ENCODE measurements at regions of chr10 and their contacts with region 1.

Region 1: DNA sequence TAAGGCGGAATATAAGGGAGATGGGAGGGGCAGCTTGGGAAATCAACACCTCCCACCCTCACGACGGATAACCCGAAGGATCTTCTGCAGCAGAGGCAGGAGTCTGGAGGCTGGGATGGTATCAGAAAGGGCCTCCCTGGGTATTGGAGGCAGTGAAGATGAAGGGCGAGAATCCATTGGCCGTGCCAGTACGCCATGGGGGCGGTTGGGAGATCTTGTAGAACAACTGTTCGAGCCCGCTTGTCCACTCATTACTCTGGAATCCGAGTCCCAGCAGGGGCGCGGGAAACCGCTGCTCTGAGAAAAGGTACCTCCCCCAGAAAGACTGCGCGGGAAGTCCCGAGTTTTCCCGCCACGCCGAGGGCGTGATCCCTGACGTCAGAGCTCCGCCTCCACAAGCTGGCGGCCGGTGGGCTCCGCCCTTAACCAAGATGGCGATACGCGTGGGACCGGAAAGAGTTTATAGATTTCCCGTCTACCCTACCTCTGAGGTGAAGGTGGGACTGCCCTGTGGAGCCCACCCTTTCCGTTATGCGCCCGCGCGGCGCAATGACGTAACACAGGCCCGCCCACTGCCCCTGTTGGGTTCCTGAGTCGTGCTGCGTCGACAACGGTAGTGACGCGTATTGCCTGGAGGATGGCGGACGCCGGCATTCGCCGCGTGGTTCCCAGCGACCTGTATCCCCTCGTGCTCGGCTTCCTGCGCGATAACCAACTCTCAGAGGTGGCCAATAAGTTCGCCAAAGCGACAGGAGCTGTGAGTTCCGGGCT is at the start of gene NOLC1:
- DNase-seq: peak; percentile 95 to 100 (median 100)
- ATAC-seq: peak; percentile 97
- H3K4me3 ChIP-seq: peak within 1 kb of the TSS; percentile 87
- H3K4me3 Mint-ChIP-seq: peak within 1 kb of the TSS; percentile 91 to 98 (median 96)
- H3K27ac ChIP-seq: peak within 1 kb of the TSS; percentile 94
- H3K27ac Mint-ChIP-seq: peak within 1 kb of the TSS; percentile 91 to 98 (median 96)
- H3K4me1 ChIP-seq: peaks cover 11 to 16% of the 10 kb centered on the region in 2 donors
- H3K4me1 Mint-ChIP-seq: peaks cover 28 to 58% (median 43%) of the 10 kb centered on the region in 7 donors
- H3K27me3 ChIP-seq: no peaks in the 10 kb centered on the region
- H3K27me3 Mint-ChIP-seq: peaks cover 0 to 4% (median 0%) of the 10 kb centered on the region in 5 donors
- total RNA-seq, gene NOLC1: 45.1 to 98.5 (median 58.8) TPM

Region 2: DNA sequence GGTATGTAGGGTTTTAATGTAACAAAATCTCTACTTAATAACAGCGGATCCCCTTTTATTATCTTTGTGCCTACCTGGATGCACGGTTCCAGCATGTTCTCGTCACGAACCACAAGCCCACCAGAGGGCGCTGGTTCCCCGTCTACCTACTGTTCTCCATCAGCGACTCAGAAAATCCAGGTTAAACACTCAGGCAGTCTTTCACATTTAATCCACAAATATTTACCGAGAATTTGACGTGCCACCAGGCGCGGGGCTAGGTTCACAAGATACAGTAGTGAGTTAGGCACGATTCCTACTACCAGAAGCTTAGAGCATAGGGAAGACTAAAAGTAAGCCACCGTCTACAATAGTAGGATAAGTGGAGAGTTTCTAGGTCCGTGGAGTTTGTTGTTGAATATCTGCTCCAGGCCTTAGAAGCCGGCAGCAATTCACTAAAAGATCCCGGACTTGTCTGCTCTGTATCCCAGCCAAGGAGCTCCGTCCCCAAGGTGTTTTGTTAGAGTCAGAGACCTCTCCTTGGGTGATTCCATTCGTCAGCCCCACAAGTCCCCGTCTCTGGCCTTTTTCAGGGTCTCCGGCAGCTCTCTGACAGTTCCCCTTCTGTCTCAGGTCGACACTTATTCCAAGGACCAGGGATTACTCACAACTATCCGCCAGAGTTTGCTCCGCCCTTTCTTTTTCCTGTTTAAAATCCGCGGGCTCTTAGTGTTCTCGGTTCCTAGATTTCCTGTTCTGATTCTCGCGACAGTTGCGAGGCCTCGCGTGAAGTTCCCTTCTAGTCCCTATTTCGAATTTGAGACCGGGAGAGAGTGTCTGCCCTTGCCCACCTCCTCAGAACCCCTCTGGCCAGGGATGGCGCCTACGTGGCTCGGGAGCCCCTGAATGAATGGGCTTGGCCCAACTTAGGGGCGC is 1091.7 kb before region 1 on chr10:
- CTCF ChIA-PET with region 1: no interaction called
- POLR2A ChIA-PET with region 1: no interaction called
- intact Hi-C with region 1: loop called in 1 of 2 experiments (anchors 1 kb)
- DNase-seq: peak; percentile 70 to 97 (median 94)
- ATAC-seq: peak; percentile 82
- H3K4me3 ChIP-seq: peak overlapping the region; percentile 96
- H3K4me3 Mint-ChIP-seq: peak overlapping the region; percentile 90 to 99 (median 96)
- H3K27ac ChIP-seq: peak overlapping the region; percentile 96
- H3K27ac Mint-ChIP-seq: peak overlapping the region; percentile 86 to 98 (median 93)
- H3K4me1 ChIP-seq: peaks cover 12 to 21% of the 10 kb centered on the region in 2 donors
- H3K4me1 Mint-ChIP-seq: peaks cover 16 to 61% (median 31%) of the 10 kb centered on the region in 7 donors
- H3K27me3 ChIP-seq: peaks cover 5 to 18% of the 10 kb centered on the region in 2 donors
- H3K27me3 Mint-ChIP-seq: peaks cover 15 to 23% (median 18%) of the 10 kb centered on the region in 5 donors

Region 3: GRCh38 chr10:102055647-102056419 is 96.1 kb before region 1 on chr10 and contains the start of gene ARMH3:
- CTCF ChIA-PET with region 1: no interaction called
- POLR2A ChIA-PET with region 1: interaction called, 3 read pairs
- intact Hi-C with region 1: loop called (anchors 1 kb)
- DNase-seq: peak; percentile 72 to 90 (median 87)
- ATAC-seq: peak; percentile 98
- H3K4me3 ChIP-seq: peak within 1 kb of the TSS; percentile 92
- H3K4me3 Mint-ChIP-seq: peak within 1 kb of the TSS; percentile 89 to 98 (median 94)
- H3K27ac ChIP-seq: peak within 1 kb of the TSS; percentile 87
- H3K27ac Mint-ChIP-seq: peak within 1 kb of the TSS; percentile 76 to 97 (median 92)
- H3K4me1 ChIP-seq: peaks cover 18 to 20% of the 10 kb centered on the region in 2 donors
- H3K4me1 Mint-ChIP-seq: peaks cover 25 to 50% (median 42%) of the 10 kb centered on the region in 7 donors
- H3K27me3 ChIP-seq: no peaks in the 10 kb centered on the region
- H3K27me3 Mint-ChIP-seq: no peaks in the 10 kb centered on the region
- total RNA-seq, gene ARMH3: 26.7 to 34.0 (median 28.8) TPM

Region 4: GRCh38 chr10:102120142-102120990 is 31.6 kb before region 1 on chr10 and contains the start of gene LDB1:
- CTCF ChIA-PET with region 1: no interaction called
- POLR2A ChIA-PET with region 1: interaction called, 8 read pairs
- intact Hi-C with region 1: loop called (anchors 1 kb)
- DNase-seq: peak; percentile 51 to 74 (median 67)
- ATAC-seq: peak; percentile 70
- H3K4me3 ChIP-seq: peak within 1 kb of the TSS; percentile 90
- H3K4me3 Mint-ChIP-seq: peak within 1 kb of the TSS; percentile 88 to 98 (median 94)
- H3K27ac ChIP-seq: peak within 1 kb of the TSS; percentile 97
- H3K27ac Mint-ChIP-seq: peak within 1 kb of the TSS; percentile 80 to 98 (median 94)
- H3K4me1 ChIP-seq: peaks cover 40 to 43% of the 10 kb centered on the region in 2 donors
- H3K4me1 Mint-ChIP-seq: peaks cover 36 to 65% (median 57%) of the 10 kb centered on the region in 7 donors
- H3K27me3 ChIP-seq: no peaks in the 10 kb centered on the region
- H3K27me3 Mint-ChIP-seq: no peaks in the 10 kb centered on the region
- total RNA-seq, gene LDB1: 101 to 152 (median 115) TPM

Region 5: DNA sequence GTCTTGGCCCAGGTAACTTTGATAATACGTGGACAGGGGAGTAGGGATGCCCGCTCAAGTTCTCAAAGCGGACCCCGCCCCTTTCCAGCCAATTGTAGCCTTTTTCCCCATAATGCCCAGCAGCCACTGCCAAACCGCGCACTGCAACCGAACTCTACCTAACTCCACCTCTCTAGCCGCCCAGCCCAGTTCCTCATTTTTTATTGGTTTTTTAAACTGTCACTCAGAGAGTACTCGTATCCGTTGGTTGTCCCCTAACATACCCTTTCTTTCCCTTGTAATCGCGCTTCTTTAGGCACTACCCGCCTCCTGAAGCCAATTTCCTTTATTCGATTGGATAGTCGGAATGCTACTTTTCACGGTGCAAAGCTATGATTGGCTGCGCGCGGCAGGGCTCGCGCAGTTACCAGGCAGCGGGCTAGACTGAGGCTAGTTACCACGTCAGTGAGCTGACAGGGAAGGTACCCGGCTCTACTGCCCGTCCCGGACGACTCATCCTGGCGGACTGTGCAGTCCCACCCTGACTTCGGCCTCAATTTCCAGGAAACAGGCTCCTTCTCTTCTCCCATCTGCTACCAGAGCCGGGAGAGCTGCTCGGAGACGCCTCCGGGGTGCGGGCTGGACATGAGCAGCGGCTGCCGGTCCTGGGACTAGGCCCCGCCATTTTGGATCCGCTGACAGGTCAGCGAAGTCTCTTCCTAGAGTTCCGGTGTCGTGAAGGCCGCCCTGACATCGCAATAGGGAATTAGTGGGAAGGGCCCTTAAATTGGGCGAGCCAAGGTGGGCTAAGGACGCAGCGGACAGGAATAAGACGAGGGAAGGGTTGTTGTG is 93.4 kb after region 1 on chr10 and contains the start of gene GBF1:
- CTCF ChIA-PET with region 1: no interaction called
- POLR2A ChIA-PET with region 1: interaction called, 3 read pairs
- intact Hi-C with region 1: loop called (anchors 1 kb)
- DNase-seq: peak; percentile 69 to 97 (median 96)
- ATAC-seq: peak; percentile 92
- H3K4me3 ChIP-seq: peak within 1 kb of the TSS; percentile 84
- H3K4me3 Mint-ChIP-seq: peak within 1 kb of the TSS; percentile 83 to 100 (median 97)
- H3K27ac ChIP-seq: peak within 1 kb of the TSS; percentile 90
- H3K27ac Mint-ChIP-seq: peak within 1 kb of the TSS; percentile 65 to 98 (median 95)
- H3K4me1 ChIP-seq: peaks cover 17 to 37% of the 10 kb centered on the region in 2 donors
- H3K4me1 Mint-ChIP-seq: peaks cover 43 to 69% (median 54%) of the 10 kb centered on the region in 7 donors
- H3K27me3 ChIP-seq: peaks cover 0 to 16% of the 10 kb centered on the region in 2 donors
- H3K27me3 Mint-ChIP-seq: peaks cover 14 to 27% (median 22%) of the 10 kb centered on the region in 5 donors
- total RNA-seq, gene GBF1: 36.2 to 47.2 (median 37.8) TPM

Region 6: GRCh38 chr10:102450194-102450938 is 298.4 kb after region 1 on chr10:
- CTCF ChIA-PET with region 1: no interaction called
- POLR2A ChIA-PET with region 1: no interaction called
- intact Hi-C with region 1: loop called (anchors 1 kb)
- DNase-seq: peak; percentile 85 to 95 (median 92)
- ATAC-seq: peak; percentile 90
- H3K4me3 ChIP-seq: peak overlapping the region; percentile 88
- H3K4me3 Mint-ChIP-seq: peak overlapping the region; percentile 89 to 97 (median 94)
- H3K27ac ChIP-seq: peak overlapping the region; percentile 90
- H3K27ac Mint-ChIP-seq: peak overlapping the region; percentile 81 to 97 (median 95)
- H3K4me1 ChIP-seq: peaks cover 12 to 14% of the 10 kb centered on the region in 2 donors
- H3K4me1 Mint-ChIP-seq: peaks cover 14 to 37% (median 27%) of the 10 kb centered on the region in 7 donors
- H3K27me3 ChIP-seq: no peaks in the 10 kb centered on the region
- H3K27me3 Mint-ChIP-seq: no peaks in the 10 kb centered on the region

Region 7: GRCh38 chr10:102743588-102744373 is 591.8 kb after region 1 on chr10 and contains the start of gene WBP1L:
- CTCF ChIA-PET with region 1: no interaction called
- POLR2A ChIA-PET with region 1: no interaction called
- intact Hi-C with region 1: loop called in 1 of 2 experiments (anchors 1 kb)
- DNase-seq: peak; percentile 77 to 98 (median 96)
- ATAC-seq: peak; percentile 98
- H3K4me3 ChIP-seq: peak within 1 kb of the TSS; percentile 85
- H3K4me3 Mint-ChIP-seq: peak within 1 kb of the TSS; percentile 80 to 97 (median 93)
- H3K27ac ChIP-seq: peak within 1 kb of the TSS; percentile 77
- H3K27ac Mint-ChIP-seq: peak within 1 kb of the TSS; percentile 57 to 96 (median 90)
- H3K4me1 ChIP-seq: peaks cover 17 to 25% of the 10 kb centered on the region in 2 donors
- H3K4me1 Mint-ChIP-seq: peaks cover 33 to 59% (median 48%) of the 10 kb centered on the region in 7 donors
- H3K27me3 ChIP-seq: no peaks in the 10 kb centered on the region
- H3K27me3 Mint-ChIP-seq: no peaks in the 10 kb centered on the region
- total RNA-seq, gene WBP1L: 20.5 to 37.9 (median 34.1) TPM